ENCODE measurements at regions of chr22 and their contacts with region 1.

Region 1: DNA sequence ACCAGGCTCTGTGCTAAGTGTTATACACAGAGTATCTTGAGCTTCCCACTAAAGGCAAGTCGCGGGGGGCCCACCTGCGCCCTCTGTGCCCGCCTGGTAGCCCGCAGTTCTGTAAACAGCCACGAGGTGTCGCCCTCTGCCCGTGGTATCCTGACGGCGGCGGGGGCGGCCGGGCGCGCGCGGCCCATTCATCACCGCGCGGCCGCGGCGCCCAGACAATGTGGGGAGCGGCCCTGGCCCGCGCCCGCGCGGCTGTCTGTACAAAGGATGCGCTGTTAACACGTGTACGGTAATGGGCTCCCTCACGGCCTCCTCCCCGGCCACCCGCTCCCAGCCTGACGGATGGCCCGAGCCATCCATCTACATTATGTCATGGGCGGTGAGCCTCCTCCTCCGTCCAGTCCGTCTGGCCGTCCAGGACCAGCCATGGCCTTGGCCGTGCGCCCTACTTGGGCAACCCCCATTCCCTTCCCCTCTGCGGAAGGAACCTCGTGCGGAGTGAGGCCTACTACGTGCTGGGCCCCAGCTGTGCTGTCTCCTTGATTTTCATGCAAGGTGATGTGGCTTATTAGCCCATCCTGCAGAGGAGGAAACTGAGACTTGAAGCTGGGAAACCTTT is 99.4 kb downstream of the MIAT start:
- DNase-seq: peak; percentile 53 to 86 (median 79)
- H3K4me3 ChIP-seq: no peak overlapping the region
- H3K27ac ChIP-seq: no peak overlapping the region
- H3K4me1 ChIP-seq: peaks cover 1% of the 10 kb centered on the region
- H3K27me3 ChIP-seq: no peaks in the 10 kb centered on the region
- CTCF ChIP-seq: peak; percentile 85 to 95 (median 95)
- EP300 ChIP-seq: no peak
- POLR2A ChIP-seq: no peak

Region 2: GRCh38 chr22:26709617-26710390 is 47.0 kb before region 1 on chr22:
- intact Hi-C with region 1: no loop called
- DNase-seq: no peak
- H3K4me3 ChIP-seq: no peak overlapping the region
- H3K27ac ChIP-seq: no peak overlapping the region
- H3K4me1 ChIP-seq: peaks cover 2% of the 10 kb centered on the region
- H3K27me3 ChIP-seq: no peaks in the 10 kb centered on the region
- CTCF ChIP-seq: no peak
- EP300 ChIP-seq: no peak
- POLR2A ChIP-seq: no peak

Region 3: GRCh38 chr22:28014211-28015045 is 1257.6 kb after region 1 on chr22:
- intact Hi-C with region 1: loop called (anchors 5 to 10 kb)
- DNase-seq: peak in 2 of 5 donors; percentile 24 to 34
- H3K4me3 ChIP-seq: no peak overlapping the region
- H3K27ac ChIP-seq: no peak overlapping the region
- H3K4me1 ChIP-seq: no peaks in the 10 kb centered on the region
- H3K27me3 ChIP-seq: no peaks in the 10 kb centered on the region
- CTCF ChIP-seq: no peak
- EP300 ChIP-seq: no peak
- POLR2A ChIP-seq: no peak

Measured in ovary (tissue), 10 donors.